ENCODE measurements at regions of chr11 and their contacts with region 1.

Region 1: DNA sequence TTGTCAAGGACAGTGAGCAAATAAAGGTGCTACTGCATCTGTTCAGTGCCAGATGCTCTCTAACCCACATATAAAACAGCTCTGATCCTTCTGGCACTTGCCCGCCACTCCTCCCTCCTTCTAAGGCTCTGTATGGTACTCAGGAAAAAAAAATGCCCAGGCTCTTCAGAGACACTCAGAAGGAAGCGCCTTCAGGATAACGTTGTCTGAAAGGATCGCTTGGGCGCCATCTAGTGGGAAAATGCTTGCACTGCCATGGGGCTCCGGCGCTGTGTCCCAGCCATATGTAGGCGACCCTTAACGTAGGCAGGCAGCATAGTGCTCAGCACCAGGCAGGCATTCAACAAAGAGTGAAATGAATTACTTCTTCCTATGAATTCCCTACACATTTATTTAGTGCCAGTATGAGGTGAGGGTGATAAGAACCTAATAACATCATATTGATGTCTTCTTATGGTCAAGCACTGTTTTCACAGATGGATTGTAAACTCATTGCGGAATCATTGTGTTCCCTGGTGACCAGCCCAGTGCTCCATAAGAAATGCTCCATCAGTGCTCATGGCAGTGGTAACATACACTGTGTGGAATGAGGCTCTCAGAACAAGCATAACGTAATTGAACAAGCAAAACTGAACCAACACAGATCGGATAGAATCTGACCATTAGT is 39.6 kb downstream of the PAMR1 start:
- DNase-seq: peak; percentile 78
- ATAC-seq: peak; percentile 85 to 92

Region 2: GRCh38 chr11:36265793-36266628 is 780.2 kb after region 1 on chr11:
- intact Hi-C with region 1: loop called in 1 of 2 experiments (anchors 2 kb)
- DNase-seq: peak; percentile 48
- ATAC-seq: peak; percentile 56 to 78

Measured in left cardiac atrium (tissue), 4 donors.